ENCODE measurements at regions of chr2 and their contacts with region 1.

Region 1: DNA sequence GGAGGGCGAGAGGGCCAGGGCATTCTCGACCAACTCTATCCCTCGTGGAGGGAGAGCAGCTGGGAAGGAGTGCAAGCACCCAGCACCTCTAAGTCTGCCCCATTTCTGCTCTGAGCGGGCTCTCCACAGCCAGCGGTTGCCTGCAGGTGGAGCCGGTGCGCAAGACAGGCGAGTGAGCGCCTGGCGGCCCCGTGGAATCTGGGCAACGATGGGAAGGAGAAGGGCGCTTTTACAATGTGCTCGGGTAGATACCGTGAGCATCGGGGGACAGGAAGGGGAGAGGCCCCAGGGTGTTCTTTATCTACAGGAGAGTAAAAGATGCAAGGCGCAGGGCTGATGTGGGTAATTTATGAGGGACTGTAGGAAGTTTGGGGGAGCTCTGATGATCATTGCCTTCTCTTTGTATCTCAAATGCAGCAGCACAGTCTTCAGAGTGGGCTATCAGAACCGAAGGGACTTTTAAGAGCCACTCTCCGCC is 867 bp upstream of the TTL start:
- ATAC-seq: peak; percentile 72 to 81 (median 76)
- H3K4me3 ChIP-seq: peak overlapping the region; percentile 54 to 77 (median 72)
- H3K27ac ChIP-seq: peak overlapping the region; percentile 74
- H3K4me1 ChIP-seq: peaks cover 10 to 12% of the 10 kb centered on the region in 2 donors

Region 2: DNA sequence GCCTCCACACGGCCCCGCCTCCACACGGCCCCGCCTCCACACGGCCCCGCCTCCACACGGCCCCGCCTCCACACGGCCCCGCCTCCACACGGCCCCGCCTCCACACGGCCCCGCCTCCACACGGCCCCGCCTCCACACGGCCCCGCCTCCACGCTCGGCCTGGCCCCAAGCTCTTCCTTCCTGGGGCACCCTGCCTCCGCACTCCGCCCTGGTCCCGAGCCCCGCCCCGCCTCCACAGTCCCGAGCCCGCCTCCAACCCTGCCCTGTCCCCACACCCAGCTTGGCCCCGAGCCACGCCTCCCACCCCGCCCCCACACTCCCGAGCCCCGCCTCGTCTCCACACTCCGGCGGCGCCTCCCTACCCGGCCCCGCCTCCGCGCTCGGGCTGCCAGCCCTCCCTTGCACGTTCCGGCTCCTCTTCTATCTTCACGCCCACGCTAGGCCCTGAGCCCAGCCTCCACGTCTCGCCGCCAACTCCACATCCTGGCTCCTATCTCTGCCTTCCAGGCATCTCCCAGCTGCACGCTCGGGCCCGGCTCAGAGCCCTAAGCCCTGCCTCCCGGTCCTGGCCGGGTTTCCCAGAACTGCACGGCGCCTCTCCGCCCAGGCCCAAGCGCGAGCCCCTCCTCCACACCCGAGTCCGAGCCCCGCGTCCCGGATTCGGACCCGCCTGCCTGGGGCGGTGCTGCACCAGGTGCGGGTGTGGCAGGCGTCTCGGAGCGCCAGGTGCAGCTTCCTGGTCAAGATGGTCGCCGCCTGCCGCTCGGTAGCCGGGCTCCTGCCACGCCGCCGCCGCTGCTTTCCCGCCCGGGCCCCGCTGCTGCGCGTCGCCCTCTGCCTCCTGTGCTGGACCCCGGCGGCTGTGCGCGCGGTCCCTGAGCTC is 426.0 kb before region 1 on chr2 and contains the start of gene TMEM87B:
- in situ Hi-C with region 1: loop called in 1 of 9 experiments (anchors 25 kb)
- ATAC-seq: peak; percentile 55 to 82 (median 77)
- H3K4me3 ChIP-seq: peak within 1 kb of the TSS; percentile 80 to 91 (median 86)
- H3K27ac ChIP-seq: peak within 1 kb of the TSS; percentile 96
- H3K4me1 ChIP-seq: peaks cover 7 to 9% of the 10 kb centered on the region in 2 donors
- total RNA-seq, gene TMEM87B: 7.8 to 18.6 (median 15.5) TPM

Region 3: GRCh38 chr2:112996635-112997034 is 515.5 kb after region 1 on chr2:
- in situ Hi-C with region 1: no loop called
- ATAC-seq: no peak
- H3K4me3 ChIP-seq: no peak overlapping the region
- H3K27ac ChIP-seq: no peak overlapping the region
- H3K4me1 ChIP-seq: no peaks in the 10 kb centered on the region